ENCODE measurements at regions of chrX and their contacts with region 1.

Region 1: GRCh38 chrX:37825209-37825842 is 22.0 kb downstream of the DYNLT3 start:
- DNase-seq: peak; percentile 35
- ATAC-seq: no peak

Region 2: GRCh38 chrX:37423860-37424464 is 401.4 kb before region 1 on chrX:
- intact Hi-C with region 1: no loop called
- DNase-seq: no peak
- ATAC-seq: no peak

Region 3: DNA sequence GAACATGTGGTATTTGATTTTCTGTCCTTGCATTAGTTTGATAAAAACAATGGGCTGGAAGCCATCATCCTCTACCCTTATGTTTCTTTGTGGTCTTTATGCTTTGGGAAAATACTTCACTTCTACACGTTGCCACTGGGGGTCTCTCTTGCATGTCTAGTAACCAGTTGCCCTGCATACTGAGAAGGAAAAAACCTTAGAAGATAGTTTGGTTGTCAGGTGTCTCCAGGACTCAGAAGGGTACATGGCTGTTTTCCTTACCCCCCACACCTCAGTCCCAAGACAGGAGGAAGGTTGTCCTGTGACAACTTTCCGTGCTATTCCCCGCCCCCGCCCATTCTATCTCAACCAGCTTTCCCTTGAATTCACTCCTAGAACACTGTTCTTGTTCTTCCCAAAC is 316.0 kb before region 1 on chrX:
- intact Hi-C with region 1: loop called in 1 of 2 experiments (anchors 2 kb)
- DNase-seq: no peak
- ATAC-seq: no peak

Region 4: GRCh38 chrX:37745354-37745753 is 80.0 kb before region 1 on chrX:
- intact Hi-C with region 1: loop called (anchors 1 to 10 kb)
- DNase-seq: peak; percentile 75
- ATAC-seq: peak; percentile 68 to 79

Measured in left cardiac atrium (tissue), 4 donors.